Psoas muscle (tissue), 8 donors: ENCODE measurements at regions of chrX and their contacts with region 1.

Region 1: GRCh38 chrX:2286731-2287130 is 214.0 kb downstream of the DHRSX start:
- DNase-seq: no peak
- ATAC-seq: no peak
- H3K4me3 ChIP-seq: no peak overlapping the region
- H3K27ac ChIP-seq: no peak overlapping the region
- H3K4me1 ChIP-seq: no peaks in the 10 kb centered on the region
- H3K27me3 ChIP-seq: no peaks in the 10 kb centered on the region
- CTCF ChIP-seq: no peak

Region 2: DNA sequence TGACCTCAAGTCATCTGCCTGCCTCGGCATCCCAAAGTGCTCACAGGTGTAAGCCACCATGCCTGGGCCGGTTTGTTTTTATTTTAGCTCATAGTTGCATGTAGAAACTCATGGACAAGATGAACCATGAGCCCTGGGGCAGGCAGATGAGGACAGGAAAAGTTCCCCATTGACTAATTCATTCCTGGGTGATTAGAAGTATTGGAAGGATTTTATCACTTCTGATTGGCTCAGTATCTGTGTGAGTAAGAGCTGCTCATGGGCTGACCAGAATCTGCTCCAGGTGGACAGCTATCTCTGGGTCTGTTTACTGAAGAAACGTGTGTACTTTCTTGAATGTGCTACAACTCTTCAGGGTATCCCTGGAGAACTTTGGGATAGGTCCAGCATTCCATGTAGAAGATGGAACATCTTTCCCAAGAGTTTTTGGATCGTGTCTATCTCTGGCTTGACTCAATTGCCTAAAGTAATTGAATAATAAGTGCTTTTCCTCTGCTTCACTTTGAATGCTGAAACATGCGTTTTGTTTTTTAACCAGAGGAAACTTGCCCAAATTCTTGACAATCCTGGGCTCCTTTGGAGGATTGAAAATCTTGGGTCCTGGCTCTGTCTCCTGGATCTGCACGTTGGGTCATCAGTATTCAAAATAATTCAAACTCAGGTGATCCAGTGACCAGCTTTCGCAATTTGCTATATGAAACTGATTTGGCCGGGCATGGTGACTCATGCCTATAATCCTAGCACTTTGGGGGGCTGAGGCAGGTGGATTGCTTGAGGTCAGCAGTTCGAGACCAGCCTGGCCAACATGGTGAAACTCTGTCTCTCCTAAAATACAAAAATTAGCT is 302.7 kb after region 1 on chrX:
- intact Hi-C with region 1: loop called in 1 of 2 experiments (anchors 5 kb)
- DNase-seq: no peak
- ATAC-seq: peak in 1 of 4 donors; percentile 36
- H3K4me3 ChIP-seq: no peak overlapping the region
- H3K27ac ChIP-seq: no peak overlapping the region
- H3K4me1 ChIP-seq: no peaks in the 10 kb centered on the region
- H3K27me3 ChIP-seq: peaks cover 0 to 18% (median 4%) of the 10 kb centered on the region in 3 donors
- CTCF ChIP-seq: no peak